ENCODE measurements at regions of chr1 and their contacts with region 1.

Region 1: GRCh38 chr1:208132287-208132883 is 111.8 kb downstream of the PLXNA2 start:
- DNase-seq: peak; percentile 87 to 91
- H3K4me3 ChIP-seq: no peak overlapping the region
- H3K4me3 Mint-ChIP-seq: peak overlapping the region; percentile 59
- H3K27ac Mint-ChIP-seq: no peak overlapping the region
- H3K4me1 ChIP-seq: peaks cover 19% of the 10 kb centered on the region
- H3K4me1 Mint-ChIP-seq: peaks cover 18% of the 10 kb centered on the region
- H3K27me3 ChIP-seq: no peaks in the 10 kb centered on the region
- H3K27me3 Mint-ChIP-seq: no peaks in the 10 kb centered on the region
- CTCF ChIP-seq: peak; percentile 74 to 93

Region 2: GRCh38 chr1:208093754-208094719 is 38.3 kb before region 1 on chr1:
- CTCF ChIA-PET with region 1: no interaction called
- POLR2A ChIA-PET with region 1: no interaction called
- intact Hi-C with region 1: no loop called
- DNase-seq: peak; percentile 74 to 77
- H3K4me3 ChIP-seq: no peak overlapping the region
- H3K4me3 Mint-ChIP-seq: no peak overlapping the region
- H3K27ac Mint-ChIP-seq: no peak overlapping the region
- H3K4me1 ChIP-seq: no peaks in the 10 kb centered on the region
- H3K4me1 Mint-ChIP-seq: no peaks in the 10 kb centered on the region
- H3K27me3 ChIP-seq: no peaks in the 10 kb centered on the region
- H3K27me3 Mint-ChIP-seq: no peaks in the 10 kb centered on the region
- CTCF ChIP-seq: peak; percentile 81 to 92

Region 3: GRCh38 chr1:208118841-208119606 is 13.4 kb before region 1 on chr1:
- CTCF ChIA-PET with region 1: interaction called, 11 read pairs
- POLR2A ChIA-PET with region 1: no interaction called
- intact Hi-C with region 1: no loop called
- DNase-seq: no peak
- H3K4me3 ChIP-seq: no peak overlapping the region
- H3K4me3 Mint-ChIP-seq: no peak overlapping the region
- H3K27ac Mint-ChIP-seq: no peak overlapping the region
- H3K4me1 ChIP-seq: peaks cover 24% of the 10 kb centered on the region
- H3K4me1 Mint-ChIP-seq: peaks cover 12% of the 10 kb centered on the region
- H3K27me3 ChIP-seq: no peaks in the 10 kb centered on the region
- H3K27me3 Mint-ChIP-seq: no peaks in the 10 kb centered on the region
- CTCF ChIP-seq: no peak

Region 4: DNA sequence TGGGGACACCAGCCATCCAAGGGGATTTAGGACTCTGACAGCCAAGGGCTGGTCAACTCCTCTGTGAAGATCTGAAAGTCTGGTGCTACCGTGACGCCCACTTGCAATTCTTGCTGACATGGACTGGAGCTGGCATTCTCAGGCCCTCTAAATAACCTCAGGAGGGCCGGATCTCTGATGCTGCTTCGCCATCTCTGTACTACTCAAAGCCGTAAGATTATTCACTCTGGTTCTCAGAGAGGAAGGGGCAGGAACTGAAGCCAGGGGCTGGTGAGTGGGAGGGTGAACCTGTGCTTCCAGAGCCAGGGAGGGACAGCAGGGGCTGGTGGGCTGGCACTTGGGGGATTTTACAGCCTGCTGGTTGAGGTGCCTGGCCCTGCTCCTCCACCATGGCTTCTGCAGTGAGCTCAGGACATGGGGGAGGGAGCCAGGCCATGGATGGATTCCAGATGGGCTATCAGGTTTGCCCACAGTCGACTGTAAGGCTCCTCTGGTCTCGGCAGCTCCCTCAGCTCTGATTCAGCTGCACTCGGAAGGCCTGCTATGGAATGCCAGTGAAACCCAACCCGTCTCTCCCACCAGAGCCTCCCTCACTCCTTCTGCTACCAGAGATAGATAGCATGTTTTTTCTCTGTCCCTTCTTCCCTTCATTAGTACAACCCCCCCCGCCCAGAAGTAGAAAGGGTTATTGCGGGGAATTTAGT is 27.3 kb after region 1 on chr1:
- CTCF ChIA-PET with region 1: interaction called, 3 read pairs
- POLR2A ChIA-PET with region 1: no interaction called
- intact Hi-C with region 1: loop called (anchors 1 kb)
- DNase-seq: no peak
- H3K4me3 ChIP-seq: no peak overlapping the region
- H3K4me3 Mint-ChIP-seq: no peak overlapping the region
- H3K27ac Mint-ChIP-seq: peak overlapping the region; percentile 33
- H3K4me1 ChIP-seq: peaks cover 33% of the 10 kb centered on the region
- H3K4me1 Mint-ChIP-seq: peaks cover 33% of the 10 kb centered on the region
- H3K27me3 ChIP-seq: no peaks in the 10 kb centered on the region
- H3K27me3 Mint-ChIP-seq: no peaks in the 10 kb centered on the region
- CTCF ChIP-seq: no peak

Region 5: DNA sequence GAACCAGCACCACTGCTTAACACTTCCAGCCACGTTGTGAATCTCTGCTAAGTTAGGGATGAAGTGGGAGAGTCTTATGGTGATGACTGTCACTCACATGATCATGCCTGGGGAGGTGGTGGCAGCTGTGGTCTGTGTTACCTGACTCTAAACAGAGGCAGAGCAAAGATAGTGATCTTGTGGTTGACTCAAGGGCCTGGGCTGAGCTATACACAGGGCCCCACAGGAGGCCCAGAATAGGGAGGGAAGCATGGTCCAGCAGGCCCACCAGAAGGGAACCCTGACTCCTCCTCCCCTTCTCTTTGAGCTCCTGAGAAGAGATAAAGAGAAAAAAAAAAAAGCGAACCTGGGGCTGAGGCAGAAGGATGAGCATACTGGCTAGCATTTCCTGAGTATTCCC is 56.8 kb after region 1 on chr1:
- CTCF ChIA-PET with region 1: interaction called, 27 read pairs
- POLR2A ChIA-PET with region 1: no interaction called
- intact Hi-C with region 1: loop called (anchors 1 kb)
- DNase-seq: no peak
- H3K4me3 ChIP-seq: no peak overlapping the region
- H3K4me3 Mint-ChIP-seq: no peak overlapping the region
- H3K27ac Mint-ChIP-seq: no peak overlapping the region
- H3K4me1 ChIP-seq: peaks cover 12% of the 10 kb centered on the region
- H3K4me1 Mint-ChIP-seq: peaks cover 20% of the 10 kb centered on the region
- H3K27me3 ChIP-seq: no peaks in the 10 kb centered on the region
- H3K27me3 Mint-ChIP-seq: no peaks in the 10 kb centered on the region
- CTCF ChIP-seq: no peak

Region 6: GRCh38 chr1:208200116-208200515 is 67.7 kb after region 1 on chr1:
- CTCF ChIA-PET with region 1: no interaction called
- POLR2A ChIA-PET with region 1: no interaction called
- intact Hi-C with region 1: no loop called
- DNase-seq: no peak
- H3K4me3 ChIP-seq: no peak overlapping the region
- H3K4me3 Mint-ChIP-seq: no peak overlapping the region
- H3K27ac Mint-ChIP-seq: peak overlapping the region; percentile 79
- H3K4me1 ChIP-seq: peaks cover 35% of the 10 kb centered on the region
- H3K4me1 Mint-ChIP-seq: peaks cover 22% of the 10 kb centered on the region
- H3K27me3 ChIP-seq: no peaks in the 10 kb centered on the region
- H3K27me3 Mint-ChIP-seq: no peaks in the 10 kb centered on the region
- CTCF ChIP-seq: no peak

Region 7: GRCh38 chr1:208245185-208245705 is 112.9 kb after region 1 on chr1:
- CTCF ChIA-PET with region 1: interaction called, 46 read pairs
- POLR2A ChIA-PET with region 1: interaction called, 5 read pairs
- intact Hi-C with region 1: loop called (anchors 1 kb)
- DNase-seq: peak; percentile 83 to 86
- H3K4me3 ChIP-seq: peak overlapping the region; percentile 6; the same call in 1 of the 2 replicates
- H3K4me3 Mint-ChIP-seq: peak overlapping the region; percentile 88
- H3K27ac Mint-ChIP-seq: no peak overlapping the region
- H3K4me1 ChIP-seq: peaks cover 6% of the 10 kb centered on the region
- H3K4me1 Mint-ChIP-seq: peaks cover 7% of the 10 kb centered on the region
- H3K27me3 ChIP-seq: 0 out of 2 replicates have a peak, but pooled peaks cover 1% of the 10 kb centered on the region
- H3K27me3 Mint-ChIP-seq: peaks cover 16% of the 10 kb centered on the region
- CTCF ChIP-seq: peak; percentile 67 to 82